Dendritic cell treated with granulocyte-macrophage colony-stimulating factor and Interleukin-4, amounts not matched to agents 40 ng/mL and 50 ng/mL, for 4 days (primary cell): ENCODE measurements at regions of chr10 and their contacts with region 1.

Region 1: DNA sequence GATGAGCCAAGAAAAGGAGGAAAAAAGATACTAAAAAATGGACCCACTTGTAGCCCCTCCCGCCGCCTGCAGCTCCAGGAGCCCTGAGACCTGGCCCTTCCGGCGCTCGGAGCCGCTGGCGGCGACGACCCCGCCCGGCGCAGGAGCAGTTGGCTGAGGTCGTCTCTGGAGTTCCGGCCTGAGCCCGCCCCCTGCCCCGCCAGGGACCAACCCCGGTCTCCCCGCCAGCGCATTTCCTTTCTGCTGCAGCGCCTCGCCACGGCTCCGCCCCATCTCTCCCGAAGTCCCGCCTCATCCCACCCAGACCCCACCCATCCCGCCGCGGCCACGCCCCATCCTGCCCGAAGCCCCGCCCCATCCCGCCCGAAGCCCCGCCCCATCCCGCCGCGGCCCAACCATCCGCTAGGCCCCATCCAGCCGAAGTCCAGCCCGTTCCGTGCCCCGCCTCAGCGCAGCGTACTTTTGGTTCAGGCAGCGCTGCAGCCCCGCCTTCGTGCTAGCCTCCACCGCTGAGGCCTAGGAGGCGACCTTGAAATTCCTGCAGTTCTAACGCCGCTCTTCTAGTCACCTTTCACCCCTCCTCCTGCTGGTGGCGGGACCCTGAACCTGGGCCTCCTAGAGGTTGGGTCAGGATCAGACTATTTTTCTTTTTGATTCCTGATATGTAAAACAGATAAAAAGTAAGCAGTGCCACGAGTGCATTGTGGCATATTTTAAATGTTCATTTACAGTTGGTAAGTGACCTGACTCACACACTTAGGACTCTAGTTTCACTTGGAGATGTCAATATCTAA is at the start of gene STN1:
- H3K4me3 Mint-ChIP-seq: peak within 1 kb of the TSS; percentile 90
- H3K27ac Mint-ChIP-seq: peak within 1 kb of the TSS; percentile 99
- H3K4me1 Mint-ChIP-seq: peaks cover 33% of the 10 kb centered on the region
- H3K27me3 Mint-ChIP-seq: no peaks in the 10 kb centered on the region

Region 2: DNA sequence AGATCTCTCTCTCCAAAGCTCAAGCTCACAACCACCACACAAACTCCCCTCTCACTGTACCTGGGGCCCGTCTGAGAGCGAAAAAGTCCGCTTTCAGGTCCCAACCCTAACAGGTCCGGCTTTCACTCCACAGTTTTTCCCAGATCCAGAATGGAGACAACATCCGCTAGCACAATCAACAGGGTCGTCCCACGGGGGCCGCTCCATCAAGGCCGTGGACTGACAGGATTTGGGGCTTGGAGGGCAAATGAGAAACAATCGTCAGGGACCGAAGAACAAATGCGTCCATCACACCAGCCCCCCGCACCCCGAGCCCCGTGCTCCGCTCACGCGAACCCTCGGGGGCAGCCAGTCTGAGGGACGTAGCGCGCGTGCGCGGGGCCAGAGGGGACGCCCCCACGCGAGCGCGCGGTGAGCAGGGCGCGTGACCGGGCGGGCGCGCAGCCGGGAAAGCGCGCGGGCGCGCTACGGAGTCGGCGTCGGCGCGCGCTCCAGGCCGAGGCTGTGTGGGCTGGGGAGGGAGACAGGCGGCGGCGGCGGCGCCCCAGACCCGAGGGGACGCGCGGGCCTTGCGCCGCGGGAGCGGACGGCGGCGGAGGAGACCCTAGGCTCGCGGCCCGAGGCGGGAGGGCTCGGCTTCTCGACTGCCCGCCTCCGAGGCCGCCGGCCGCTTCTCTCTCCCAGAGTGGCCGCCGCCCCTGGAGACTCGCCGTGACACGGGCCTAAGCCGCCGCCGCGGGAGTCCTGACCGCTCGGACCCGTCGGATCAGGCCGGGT is 48.6 kb after region 1 on chr10 and contains the start of gene SLK:
- intact Hi-C with region 1: loop called (anchors 2 kb)
- H3K4me3 Mint-ChIP-seq: peak within 1 kb of the TSS; percentile 97
- H3K27ac Mint-ChIP-seq: peak within 1 kb of the TSS; percentile 85
- H3K4me1 Mint-ChIP-seq: peaks cover 34% of the 10 kb centered on the region
- H3K27me3 Mint-ChIP-seq: no peaks in the 10 kb centered on the region

Region 3: GRCh38 chr10:104231784-104232612 is 313.7 kb after region 1 on chr10 and contains the start of gene CFAP43:
- intact Hi-C with region 1: no loop called
- H3K4me3 Mint-ChIP-seq: peak within 1 kb of the TSS; percentile 84
- H3K27ac Mint-ChIP-seq: peak within 1 kb of the TSS; percentile 77
- H3K4me1 Mint-ChIP-seq: peaks cover 10% of the 10 kb centered on the region
- H3K27me3 Mint-ChIP-seq: peaks cover 19% of the 10 kb centered on the region